ENCODE measurements at regions of chr9 and their contacts with region 1.

Region 1: GRCh38 chr9:96859461-96860198 is 5.3 kb upstream of the ZNF782 start:
- DNase-seq: no peak
- H3K4me3 ChIP-seq: no peak overlapping the region
- H3K27ac ChIP-seq: no peak overlapping the region
- H3K4me1 ChIP-seq: peaks cover 0 to 6% (median 4%) of the 10 kb centered on the region in 4 donors
- H3K27me3 ChIP-seq: no peaks in the 10 kb centered on the region
- CTCF ChIP-seq: no peak
- EP300 ChIP-seq: no peak
- POLR2A ChIP-seq: no peak

Region 2: GRCh38 chr9:96654443-96655197 is 205.0 kb before region 1 on chr9:
- intact Hi-C with region 1: no loop called
- DNase-seq: peak; percentile 95
- H3K4me3 ChIP-seq: peak overlapping the region; percentile 72 to 82 (median 73)
- H3K27ac ChIP-seq: peak overlapping the region; percentile 97 to 99 (median 98)
- H3K4me1 ChIP-seq: peaks cover 26 to 40% (median 30%) of the 10 kb centered on the region in 4 donors
- H3K27me3 ChIP-seq: no peaks in the 10 kb centered on the region
- CTCF ChIP-seq: peak in 2 of 3 experiments; percentile 31 to 33
- EP300 ChIP-seq: no peak
- POLR2A ChIP-seq: peak; percentile 28

Region 3: DNA sequence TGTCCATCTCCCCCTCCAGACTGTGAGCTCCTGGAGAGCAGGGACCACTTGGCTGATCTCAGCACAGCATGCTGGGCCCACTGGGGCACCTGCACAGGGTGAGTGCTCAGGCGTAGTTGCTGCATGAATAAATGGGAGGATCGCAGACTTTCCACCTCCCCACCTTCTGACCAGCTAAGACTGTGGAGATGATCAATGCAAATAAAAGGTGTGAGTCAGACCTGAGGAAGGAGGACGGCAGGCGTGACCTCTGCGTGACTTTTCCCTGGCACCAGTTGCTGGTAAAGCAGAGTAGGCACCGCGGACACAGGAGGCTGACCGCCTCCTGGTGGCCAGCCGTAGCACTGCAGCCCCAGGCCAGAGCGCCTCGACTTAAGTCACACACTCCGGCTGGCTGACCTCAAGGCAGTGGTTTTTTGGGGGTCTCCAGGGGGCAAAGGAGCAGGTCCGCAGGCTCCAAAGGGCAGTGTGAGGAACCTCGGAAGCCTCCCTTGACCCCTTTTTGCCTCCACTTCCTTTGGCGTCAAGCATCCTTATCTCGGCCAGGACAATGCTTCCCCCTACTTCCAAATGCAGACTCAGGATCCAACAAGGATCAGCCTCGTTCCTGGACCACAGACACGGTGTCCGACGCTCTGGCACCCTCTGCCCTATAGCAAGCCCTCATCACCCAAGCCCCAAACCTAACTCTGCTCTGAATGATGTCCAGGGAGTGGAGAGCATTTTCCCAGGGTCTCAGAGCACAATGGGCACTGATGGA is 539.5 kb after region 1 on chr9:
- intact Hi-C with region 1: loop called (anchors 5 kb)
- DNase-seq: no peak
- H3K4me3 ChIP-seq: no peak overlapping the region
- H3K27ac ChIP-seq: no peak overlapping the region
- H3K4me1 ChIP-seq: peaks cover 0 to 8% (median 2%) of the 10 kb centered on the region in 4 donors
- H3K27me3 ChIP-seq: no peaks in the 10 kb centered on the region
- CTCF ChIP-seq: peak; percentile 84 to 93 (median 85)
- EP300 ChIP-seq: no peak
- POLR2A ChIP-seq: no peak

Measured in esophagus muscularis mucosa (tissue), 4 donors.